CD8-positive, alpha-beta memory T cell (primary cell): ENCODE measurements at regions of chrX and their contacts with region 1.

Region 1: GRCh38 chrX:118603981-118604380 is 108.4 kb downstream of the DOCK11 start:
- DNase-seq: peak; percentile 1 to 50 (median 24)
- H3K4me3 ChIP-seq: no peak overlapping the region
- H3K4me3 Mint-ChIP-seq: peak overlapping the region in 2 of 7 donors; percentile 32 to 38
- H3K27ac ChIP-seq: no peak overlapping the region
- H3K27ac Mint-ChIP-seq: peak overlapping the region in 6 of 8 donors; percentile 25 to 81 (median 60)
- H3K4me1 ChIP-seq: peaks cover 7% of the 10 kb centered on the region
- H3K4me1 Mint-ChIP-seq: peaks cover 11 to 23% (median 23%) of the 10 kb centered on the region in 3 donors
- H3K27me3 ChIP-seq: no peaks in the 10 kb centered on the region
- H3K27me3 Mint-ChIP-seq: peaks cover 0 to 2% of the 10 kb centered on the region in 2 donors

Region 2: DNA sequence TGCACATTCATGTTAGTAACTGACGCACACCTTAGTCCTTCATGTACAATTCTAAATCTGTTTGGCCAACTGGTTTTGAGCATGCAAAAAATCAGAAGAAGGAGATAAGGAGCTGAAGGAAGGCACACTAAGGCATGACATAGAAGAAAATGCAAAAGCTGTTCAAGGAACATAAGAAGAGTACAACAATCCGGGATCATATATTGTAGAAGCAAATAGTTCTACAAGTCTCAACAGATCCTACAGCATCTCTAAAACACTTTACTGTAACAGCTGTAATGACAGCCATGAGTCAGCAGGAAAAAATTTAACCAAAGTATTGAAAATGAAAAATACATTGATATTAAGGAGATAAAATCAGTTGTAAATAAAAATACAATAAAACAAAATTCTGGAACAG is 545.1 kb before region 1 on chrX:
- CTCF ChIA-PET with region 1: no interaction called
- POLR2A ChIA-PET with region 1: no interaction called
- DNase-seq: no peak
- H3K4me3 ChIP-seq: no peak overlapping the region
- H3K4me3 Mint-ChIP-seq: no peak overlapping the region
- H3K27ac ChIP-seq: no peak overlapping the region
- H3K27ac Mint-ChIP-seq: no peak overlapping the region
- H3K4me1 ChIP-seq: no peaks in the 10 kb centered on the region
- H3K4me1 Mint-ChIP-seq: no peaks in the 10 kb centered on the region
- H3K27me3 ChIP-seq: no peaks in the 10 kb centered on the region
- H3K27me3 Mint-ChIP-seq: peaks cover 0 to 2% of the 10 kb centered on the region in 2 donors

Region 3: DNA sequence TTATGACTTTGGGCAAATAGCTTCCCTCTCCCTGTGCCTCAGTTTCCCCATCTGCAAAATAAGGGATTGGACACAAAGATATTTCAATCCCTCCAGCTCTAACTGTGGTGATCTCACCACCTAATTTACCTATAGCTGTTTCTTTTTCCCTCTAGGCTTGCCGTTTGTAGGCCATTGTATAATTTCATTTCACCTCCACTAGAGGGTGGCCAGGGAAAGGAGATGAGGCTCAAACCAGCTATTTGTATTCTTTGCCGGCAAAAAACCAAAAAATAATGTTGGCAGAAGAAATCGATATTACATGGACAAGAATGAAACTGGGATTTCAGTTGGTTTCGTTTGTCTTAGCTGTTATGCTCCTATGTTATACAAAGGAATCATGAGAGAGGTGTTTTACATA is 144.5 kb before region 1 on chrX:
- CTCF ChIA-PET with region 1: interaction called, 24 read pairs
- POLR2A ChIA-PET with region 1: no interaction called
- DNase-seq: peak in 2 of 5 donors; percentile 26 to 38
- H3K4me3 ChIP-seq: no peak overlapping the region
- H3K4me3 Mint-ChIP-seq: no peak overlapping the region
- H3K27ac ChIP-seq: no peak overlapping the region
- H3K27ac Mint-ChIP-seq: peak overlapping the region in 1 of 8 donors; percentile 69
- H3K4me1 ChIP-seq: no peaks in the 10 kb centered on the region
- H3K4me1 Mint-ChIP-seq: peaks cover 0 to 4% (median 3%) of the 10 kb centered on the region in 3 donors
- H3K27me3 ChIP-seq: no peaks in the 10 kb centered on the region
- H3K27me3 Mint-ChIP-seq: peaks cover 0 to under 1% of the 10 kb centered on the region in 2 donors

Region 4: GRCh38 chrX:118495061-118495921 is 108.7 kb before region 1 on chrX and contains the start of gene DOCK11:
- CTCF ChIA-PET with region 1: interaction called, 10 read pairs
- POLR2A ChIA-PET with region 1: interaction called, 7 read pairs
- DNase-seq: peak; percentile 69 to 89 (median 79)
- H3K4me3 ChIP-seq: peak within 1 kb of the TSS; percentile 84
- H3K4me3 Mint-ChIP-seq: peak within 1 kb of the TSS; percentile 96 to 99 (median 99)
- H3K27ac ChIP-seq: peak within 1 kb of the TSS; percentile 90
- H3K27ac Mint-ChIP-seq: peak within 1 kb of the TSS; percentile 95 to 99 (median 98)
- H3K4me1 ChIP-seq: peaks cover 32% of the 10 kb centered on the region
- H3K4me1 Mint-ChIP-seq: peaks cover 21 to 30% (median 29%) of the 10 kb centered on the region in 3 donors
- H3K27me3 ChIP-seq: no peaks in the 10 kb centered on the region
- H3K27me3 Mint-ChIP-seq: no peaks in the 10 kb centered on the region
- total RNA-seq, gene DOCK11: 49.4 to 50.1 TPM

Region 5: DNA sequence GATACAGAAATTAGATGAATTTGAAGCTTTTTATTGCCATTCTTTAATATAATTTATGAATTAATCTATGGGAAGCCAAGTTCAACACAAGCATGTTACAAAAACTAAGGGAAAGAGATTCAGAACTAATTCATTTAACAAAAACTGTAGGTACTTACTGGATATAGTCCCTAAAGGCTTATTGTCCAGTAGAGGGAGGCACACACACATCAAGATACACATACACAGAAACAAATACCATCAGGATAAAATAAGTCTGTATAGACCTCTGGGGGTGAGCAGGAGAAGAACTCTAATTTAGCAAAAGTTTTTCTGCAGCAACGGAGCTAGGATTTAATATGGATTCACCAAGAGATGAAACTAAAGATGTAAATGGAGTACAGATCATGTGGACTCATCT is 40.4 kb after region 1 on chrX:
- CTCF ChIA-PET with region 1: no interaction called
- POLR2A ChIA-PET with region 1: no interaction called
- DNase-seq: no peak
- H3K4me3 ChIP-seq: no peak overlapping the region
- H3K4me3 Mint-ChIP-seq: no peak overlapping the region
- H3K27ac ChIP-seq: no peak overlapping the region
- H3K27ac Mint-ChIP-seq: no peak overlapping the region
- H3K4me1 ChIP-seq: no peaks in the 10 kb centered on the region
- H3K4me1 Mint-ChIP-seq: peaks cover 0 to 3% (median 0%) of the 10 kb centered on the region in 3 donors
- H3K27me3 ChIP-seq: no peaks in the 10 kb centered on the region
- H3K27me3 Mint-ChIP-seq: no peaks in the 10 kb centered on the region